GM12878 (cell line): ENCODE measurements at regions of chr11 and their contacts with region 1.

Region 1: GRCh38 chr11:13384908-13385640 is 77.9 kb downstream of the BTBD10 start:
- DNase-seq: peak; percentile 3
- ATAC-seq: peak; percentile 74
- H3K4me3 ChIP-seq: no peak overlapping the region
- H3K27ac ChIP-seq: no peak overlapping the region
- H3K4me1 ChIP-seq: no peaks in the 10 kb centered on the region
- H3K27me3 ChIP-seq: no peaks in the 10 kb centered on the region
- CTCF ChIP-seq: peak; percentile 58 to 69 (median 58)
- EP300 ChIP-seq: no peak
- POLR2A ChIP-seq: no peak
- RAD21 ChIP-seq: peak; percentile 58

Region 2: DNA sequence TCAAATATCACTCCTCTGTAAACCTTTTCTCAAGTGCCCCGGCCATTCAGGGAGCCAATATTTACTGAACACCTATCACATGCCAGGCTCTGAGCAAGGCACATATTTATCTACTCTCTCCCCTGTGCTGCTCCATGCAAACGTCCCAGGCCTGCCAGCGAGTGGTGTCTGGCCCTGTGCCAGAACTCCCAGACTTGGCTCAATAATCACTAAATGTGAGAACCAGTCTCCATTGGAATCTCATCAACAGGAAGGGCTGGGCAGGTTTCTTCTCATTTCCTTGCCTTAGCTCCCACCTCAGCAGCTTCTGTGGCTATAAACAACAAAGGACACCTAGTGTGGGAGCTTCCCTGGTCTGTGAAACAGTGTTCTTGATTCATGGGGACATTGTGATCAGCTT is 354.2 kb before region 1 on chr11:
- CTCF ChIA-PET with region 1: no interaction called
- POLR2A ChIA-PET with region 1: no interaction called
- RAD21 ChIA-PET with region 1: no interaction called
- SMC1A ChIA-PET with region 1: no interaction called
- in situ Hi-C with region 1: no loop called
- intact Hi-C with region 1: no loop called
- DNase-seq: no peak
- ATAC-seq: no peak
- H3K4me3 ChIP-seq: no peak overlapping the region
- H3K27ac ChIP-seq: no peak overlapping the region
- H3K4me1 ChIP-seq: no peaks in the 10 kb centered on the region
- H3K27me3 ChIP-seq: no peaks in the 10 kb centered on the region; a peak in 1 of 4 replicates
- CTCF ChIP-seq: no peak
- EP300 ChIP-seq: no peak
- POLR2A ChIP-seq: no peak
- RAD21 ChIP-seq: no peak

Region 3: DNA sequence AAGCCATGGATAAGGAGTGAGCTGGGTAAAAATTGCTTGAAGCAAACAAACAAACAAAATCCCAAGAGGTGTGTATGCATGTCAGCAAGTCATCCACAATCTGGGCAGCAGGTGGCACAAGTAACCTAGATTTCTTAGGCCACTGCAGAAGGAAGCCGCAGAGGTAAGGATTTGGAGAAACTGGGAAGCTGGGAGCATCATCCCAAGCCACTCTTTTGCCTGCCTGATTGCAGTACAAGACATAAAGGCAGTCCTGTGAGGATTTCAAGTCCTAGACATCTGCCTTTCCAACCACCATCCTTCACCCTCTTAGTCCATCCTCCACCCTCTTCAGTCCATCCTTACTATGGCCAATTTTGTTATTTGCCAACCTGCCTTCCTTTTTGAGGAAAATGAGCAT is 174.7 kb before region 1 on chr11:
- CTCF ChIA-PET with region 1: interaction called, 44 read pairs
- POLR2A ChIA-PET with region 1: interaction called, 3 read pairs
- RAD21 ChIA-PET with region 1: interaction called, 9 read pairs
- SMC1A ChIA-PET with region 1: interaction called, 5 read pairs
- in situ Hi-C with region 1: no loop called
- intact Hi-C with region 1: loop called (anchors 2 kb)
- DNase-seq: no peak
- ATAC-seq: peak; percentile 66
- H3K4me3 ChIP-seq: no peak overlapping the region
- H3K27ac ChIP-seq: no peak overlapping the region
- H3K4me1 ChIP-seq: peaks cover 12% of the 10 kb centered on the region
- H3K27me3 ChIP-seq: no peaks in the 10 kb centered on the region; a peak in 1 of 4 replicates
- CTCF ChIP-seq: peak; percentile 32 to 49 (median 47); a peak in 5 of 6 replicates
- EP300 ChIP-seq: no peak
- POLR2A ChIP-seq: no peak
- RAD21 ChIP-seq: peak; percentile 74

Region 4: DNA sequence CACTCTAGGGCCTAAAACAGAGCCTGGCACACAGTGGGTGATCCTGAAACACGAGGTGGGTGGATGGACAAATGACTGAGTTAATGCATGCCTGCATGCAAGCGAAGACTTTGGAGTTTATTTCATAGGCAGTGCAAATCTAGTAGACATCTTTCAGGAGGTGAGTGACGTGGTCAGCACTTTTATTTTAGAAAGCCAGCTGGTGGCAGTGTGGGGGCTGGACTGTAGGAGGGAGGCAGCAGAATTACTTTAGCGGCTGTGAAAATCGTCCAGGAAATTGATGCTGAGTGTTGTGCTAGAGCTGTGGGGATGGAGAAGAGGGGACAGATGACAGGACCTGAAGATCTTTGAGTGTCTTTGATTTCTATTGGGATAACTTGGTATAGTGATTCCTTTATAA is 60.4 kb before region 1 on chr11:
- CTCF ChIA-PET with region 1: no interaction called
- POLR2A ChIA-PET with region 1: no interaction called
- RAD21 ChIA-PET with region 1: no interaction called
- SMC1A ChIA-PET with region 1: no interaction called
- in situ Hi-C with region 1: no loop called
- intact Hi-C with region 1: no loop called
- DNase-seq: no peak
- ATAC-seq: no peak
- H3K4me3 ChIP-seq: no peak overlapping the region
- H3K27ac ChIP-seq: no peak overlapping the region
- H3K4me1 ChIP-seq: peaks cover 12% of the 10 kb centered on the region
- H3K27me3 ChIP-seq: no peaks in the 10 kb centered on the region
- CTCF ChIP-seq: no peak
- EP300 ChIP-seq: no peak
- POLR2A ChIP-seq: no peak
- RAD21 ChIP-seq: no peak

Region 5: GRCh38 chr11:13343931-13344717 is 41.0 kb before region 1 on chr11:
- CTCF ChIA-PET with region 1: interaction called, 12 read pairs
- POLR2A ChIA-PET with region 1: no interaction called
- RAD21 ChIA-PET with region 1: interaction called, 4 read pairs
- SMC1A ChIA-PET with region 1: interaction called, 5 read pairs
- in situ Hi-C with region 1: no loop called
- intact Hi-C with region 1: no loop called
- DNase-seq: no peak
- ATAC-seq: peak; percentile 69
- H3K4me3 ChIP-seq: no peak overlapping the region
- H3K27ac ChIP-seq: no peak overlapping the region
- H3K4me1 ChIP-seq: peaks cover 40% of the 10 kb centered on the region
- H3K27me3 ChIP-seq: no peaks in the 10 kb centered on the region
- CTCF ChIP-seq: peak; percentile 79 to 84 (median 80)
- EP300 ChIP-seq: no peak
- POLR2A ChIP-seq: no peak
- RAD21 ChIP-seq: peak; percentile 84

Region 6: GRCh38 chr11:13354335-13354734 is 30.7 kb before region 1 on chr11:
- CTCF ChIA-PET with region 1: interaction called, 10 read pairs
- POLR2A ChIA-PET with region 1: no interaction called
- RAD21 ChIA-PET with region 1: no interaction called
- SMC1A ChIA-PET with region 1: interaction called, 4 read pairs
- in situ Hi-C with region 1: no loop called
- intact Hi-C with region 1: no loop called
- DNase-seq: no peak
- ATAC-seq: peak; percentile 22; the same call in 2 of the 3 replicates
- H3K4me3 ChIP-seq: no peak overlapping the region
- H3K27ac ChIP-seq: no peak overlapping the region
- H3K4me1 ChIP-seq: no peaks in the 10 kb centered on the region
- H3K27me3 ChIP-seq: no peaks in the 10 kb centered on the region
- CTCF ChIP-seq: peak; percentile 23 to 30 (median 29); a peak in 4 of 6 replicates
- EP300 ChIP-seq: no peak
- POLR2A ChIP-seq: no peak
- RAD21 ChIP-seq: no peak

Region 7: DNA sequence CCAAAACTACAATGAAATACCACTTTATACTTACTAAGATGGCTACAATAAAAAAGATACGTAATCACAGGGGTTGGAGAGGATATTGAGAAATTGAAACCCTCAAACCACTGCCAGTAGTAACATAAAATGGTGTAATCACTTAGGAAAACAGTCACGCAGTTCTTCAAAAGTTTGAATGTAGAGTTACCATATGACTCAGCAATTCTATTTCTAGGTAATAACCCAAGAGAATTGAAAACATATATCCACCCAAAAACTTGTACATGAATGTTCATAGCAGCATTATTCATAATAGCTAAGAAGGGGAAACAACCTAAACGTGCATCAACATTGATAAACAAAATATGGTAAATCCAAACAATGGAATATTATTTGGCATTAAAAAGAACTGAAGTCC is 1159.5 kb after region 1 on chr11:
- CTCF ChIA-PET with region 1: no interaction called
- POLR2A ChIA-PET with region 1: no interaction called
- RAD21 ChIA-PET with region 1: no interaction called
- SMC1A ChIA-PET with region 1: no interaction called
- in situ Hi-C with region 1: no loop called
- intact Hi-C with region 1: no loop called
- DNase-seq: peak; percentile 17
- ATAC-seq: peak; percentile 90
- H3K4me3 ChIP-seq: no peak overlapping the region
- H3K27ac ChIP-seq: no peak overlapping the region
- H3K4me1 ChIP-seq: no peaks in the 10 kb centered on the region
- H3K27me3 ChIP-seq: no peaks in the 10 kb centered on the region
- CTCF ChIP-seq: no peak
- EP300 ChIP-seq: peak in 1 of 2 experiments; percentile 50; a peak in 1 of 4 replicates
- POLR2A ChIP-seq: no peak
- RAD21 ChIP-seq: no peak